ENCODE measurements at regions of chr2 and their contacts with region 1.

Region 1: DNA sequence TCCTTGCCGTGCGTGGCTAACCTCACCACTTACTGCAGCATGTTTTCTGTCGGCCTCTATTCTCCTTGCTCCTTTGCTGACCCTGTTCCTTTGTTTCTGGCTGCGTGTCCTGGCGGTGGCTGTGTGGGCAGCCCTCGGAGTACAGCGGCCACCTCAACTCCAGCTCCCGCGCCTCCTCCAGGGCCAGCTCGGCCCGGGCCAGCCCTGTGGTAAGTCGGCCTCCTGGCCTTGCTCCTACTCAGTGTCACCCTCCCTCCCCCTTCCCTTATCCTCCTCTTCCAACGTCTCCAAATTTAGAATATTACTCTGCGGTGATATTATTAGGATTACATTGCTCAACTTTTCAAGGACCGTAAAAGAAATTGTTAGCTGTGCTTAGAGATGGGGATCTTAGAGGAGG is 59.5 kb upstream of the RBM44 start:
- DNase-seq: peak; percentile 89

Region 2: DNA sequence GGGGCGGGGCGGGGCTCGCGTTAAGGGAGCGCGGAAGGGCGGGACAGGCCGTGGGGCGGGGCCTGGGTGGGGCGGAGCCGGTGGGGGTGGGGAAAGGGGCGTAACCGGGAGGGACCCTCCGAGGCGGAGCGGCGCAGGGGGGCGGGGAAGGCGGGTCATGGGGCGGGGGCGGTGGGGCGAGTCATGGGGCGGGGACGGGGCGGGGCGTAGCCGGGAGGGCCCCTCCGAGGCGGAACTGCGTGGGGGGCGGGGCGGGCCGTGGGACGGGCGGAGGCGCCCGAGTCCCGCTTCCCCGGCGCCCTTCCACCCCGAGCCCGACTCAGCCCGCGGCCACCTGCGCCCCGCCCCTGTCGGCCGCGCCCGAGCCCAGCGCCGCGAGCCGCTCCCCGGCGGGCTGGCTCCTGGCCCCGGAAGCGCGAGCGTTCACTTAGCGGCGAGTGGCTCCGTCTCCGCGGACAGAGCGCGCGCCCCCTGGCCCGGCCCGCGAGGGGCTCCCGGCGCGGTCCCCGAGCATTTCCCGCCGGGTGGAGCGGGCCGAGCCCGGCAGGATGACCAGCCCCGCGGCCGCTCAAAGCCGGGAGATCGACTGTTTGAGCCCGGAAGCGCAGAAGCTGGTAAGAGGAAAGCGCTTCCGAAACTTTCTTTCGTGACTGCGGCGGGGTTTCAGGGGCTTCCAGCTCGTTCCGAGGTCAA is 47.0 kb before region 1 on chr2:
- intact Hi-C with region 1: loop called in 1 of 2 experiments (anchors 1 kb)
- DNase-seq: peak; percentile 99